Thyroid gland (tissue), 4 donors: ENCODE measurements at regions of chr2 and their contacts with region 1.

Region 1: DNA sequence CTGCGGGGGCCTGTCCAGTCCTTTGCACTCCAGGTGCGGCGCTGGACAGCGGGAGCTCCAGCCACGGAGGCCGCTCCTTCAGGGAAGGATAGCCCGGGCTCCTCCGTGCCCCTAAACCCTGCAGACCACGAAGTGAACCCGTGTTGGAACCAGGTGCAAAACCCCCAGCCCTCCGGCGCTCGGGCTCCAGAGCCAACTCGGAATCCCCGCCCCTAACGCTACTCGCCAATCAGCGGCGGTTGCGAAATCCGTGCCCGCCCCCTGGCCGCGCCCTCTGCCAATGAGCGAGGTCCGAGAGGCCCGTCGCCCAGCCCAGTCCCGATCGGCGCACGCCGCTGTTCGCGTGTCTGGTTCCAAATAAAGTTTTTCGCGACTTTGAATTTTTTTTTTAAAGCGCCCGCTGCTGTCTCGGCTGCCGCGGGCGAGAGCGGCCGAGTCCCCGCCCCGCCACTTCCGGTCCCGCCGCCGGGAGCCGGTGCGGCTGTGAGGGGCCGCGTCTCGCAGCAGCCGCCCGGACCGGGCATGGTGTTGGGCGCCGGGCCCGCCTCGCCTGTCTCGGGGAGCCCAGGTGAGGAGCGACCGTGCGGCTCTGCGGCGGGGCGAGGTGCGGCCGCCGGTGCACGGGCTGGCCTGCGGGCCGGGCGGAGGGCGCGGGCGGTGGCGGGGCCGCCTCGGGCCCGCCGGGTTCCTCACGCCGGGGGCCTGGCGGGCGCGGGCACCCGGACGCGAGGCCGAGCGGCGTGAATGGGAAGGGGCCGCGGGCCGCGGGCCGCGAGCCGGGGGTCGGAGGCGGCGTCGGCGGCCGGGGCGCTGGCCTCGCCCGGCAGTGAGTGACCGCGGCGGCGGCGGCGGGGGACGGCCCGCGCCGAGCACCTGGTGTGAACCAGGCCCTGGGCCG is at the start of gene UBE2F:
- DNase-seq: peak; percentile 97 to 98
- H3K4me3 ChIP-seq: peak within 1 kb of the TSS; percentile 46 to 72 (median 62)
- H3K27ac ChIP-seq: peak within 1 kb of the TSS; percentile 36 to 76 (median 69)
- H3K4me1 ChIP-seq: peaks cover 27 to 35% of the 10 kb centered on the region in 2 donors
- H3K27me3 ChIP-seq: no peaks in the 10 kb centered on the region
- CTCF ChIP-seq: no peak
- POLR2A ChIP-seq: peak; percentile 69 to 92
- total RNA-seq, gene UBE2F: 79.8 to 134 (median 122) TPM

Region 2: DNA sequence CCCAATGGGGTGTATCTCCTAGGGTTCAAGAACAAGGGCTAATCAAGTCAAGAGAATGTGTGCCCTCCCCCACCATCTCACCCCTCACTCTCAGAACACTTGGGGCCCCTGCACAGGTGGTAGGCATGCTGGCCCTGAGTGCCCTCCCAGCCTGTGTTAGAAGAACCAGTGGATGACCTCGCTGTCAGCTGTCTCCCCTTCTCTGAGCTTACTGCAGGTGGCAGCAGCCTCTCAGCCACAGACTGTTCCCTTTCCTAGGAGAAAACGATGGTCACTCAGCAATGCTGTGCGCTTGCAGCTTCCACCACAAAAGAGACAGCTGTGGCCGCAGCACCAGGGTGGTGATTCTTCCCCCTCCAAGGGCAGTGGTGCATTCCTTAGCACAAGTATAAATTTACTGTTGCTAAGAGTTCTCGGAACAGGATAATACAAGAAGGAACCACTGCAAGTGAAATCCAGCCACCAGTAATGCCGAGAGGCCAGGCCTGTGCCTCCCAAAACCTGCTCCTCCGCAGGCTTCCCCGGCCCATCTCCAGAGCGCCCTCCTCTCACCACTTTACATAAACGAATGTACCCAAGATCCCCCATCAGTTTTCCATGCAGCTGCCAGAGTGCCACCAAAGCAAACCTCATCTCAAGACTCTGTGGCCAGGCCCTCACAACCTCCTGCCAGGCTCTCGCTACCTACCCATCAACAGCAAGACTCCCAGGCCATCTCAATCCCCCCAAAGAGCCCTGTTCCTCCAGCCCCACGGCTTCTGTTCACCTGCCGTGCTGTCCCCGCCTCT is 108.3 kb before region 1 on chr2:
- intact Hi-C with region 1: loop called (anchors 10 kb)
- DNase-seq: peak; percentile 69 to 71
- H3K4me3 ChIP-seq: no peak overlapping the region
- H3K27ac ChIP-seq: no peak overlapping the region
- H3K4me1 ChIP-seq: peaks cover 6 to 16% of the 10 kb centered on the region in 2 donors
- H3K27me3 ChIP-seq: no peaks in the 10 kb centered on the region
- CTCF ChIP-seq: peak; percentile 24 to 85 (median 76)
- POLR2A ChIP-seq: no peak

Region 3: DNA sequence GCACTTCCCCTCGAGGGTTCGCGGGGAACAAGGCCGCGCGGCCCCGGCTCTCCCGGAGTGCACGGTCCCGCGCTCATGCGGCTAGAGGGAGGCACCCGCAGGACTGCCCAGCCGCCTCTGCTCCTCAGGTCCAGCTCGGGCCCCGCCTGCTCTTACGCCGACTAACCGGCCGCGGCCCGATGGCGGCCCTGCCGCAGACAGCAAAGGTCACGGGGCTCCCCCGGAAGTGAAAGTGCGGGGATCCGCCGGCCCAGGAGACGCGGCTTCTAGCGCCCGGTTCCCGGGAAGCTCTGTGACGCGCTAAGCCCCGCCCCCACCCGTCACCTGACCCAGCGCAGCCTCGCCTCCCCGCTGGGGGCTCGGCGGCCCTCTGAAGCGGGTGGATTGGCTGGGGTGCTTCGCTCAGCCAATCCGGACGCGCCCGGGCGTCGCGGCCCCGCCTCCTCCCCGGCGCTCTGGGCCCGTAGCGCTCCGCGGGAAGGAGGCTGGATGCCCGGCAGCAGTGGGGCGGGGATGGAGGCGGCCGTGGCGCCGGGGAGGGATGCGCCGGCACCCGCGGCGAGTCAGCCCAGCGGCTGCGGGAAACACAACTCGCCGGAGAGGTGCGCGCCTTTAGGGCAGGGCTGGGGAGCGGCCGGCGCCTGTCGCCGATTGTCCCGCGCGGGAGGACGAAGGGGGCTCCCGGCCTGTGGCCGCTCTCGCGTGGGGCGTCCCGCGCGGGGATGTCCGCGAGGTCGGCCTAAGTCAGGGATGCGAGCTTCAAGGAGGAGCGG is 93.9 kb after region 1 on chr2 and contains the start of gene SCLY:
- intact Hi-C with region 1: loop called (anchors 2 kb)
- DNase-seq: peak; percentile 98
- H3K4me3 ChIP-seq: peak within 1 kb of the TSS; percentile 68 to 91 (median 76)
- H3K27ac ChIP-seq: peak within 1 kb of the TSS; percentile 65 to 87 (median 85)
- H3K4me1 ChIP-seq: peaks cover 10 to 12% of the 10 kb centered on the region in 2 donors
- H3K27me3 ChIP-seq: no peaks in the 10 kb centered on the region
- CTCF ChIP-seq: no peak
- POLR2A ChIP-seq: peak in 1 of 2 donors; percentile 87
- total RNA-seq, gene SCLY: 21.8 to 48.2 (median 31.0) TPM

Region 4: GRCh38 chr2:238256594-238257104 is 289.8 kb after region 1 on chr2:
- intact Hi-C with region 1: loop called (anchors 10 kb)
- DNase-seq: peak; percentile 93 to 94
- H3K4me3 ChIP-seq: no peak overlapping the region
- H3K27ac ChIP-seq: no peak overlapping the region
- H3K4me1 ChIP-seq: peaks cover 11 to 18% of the 10 kb centered on the region in 2 donors
- H3K27me3 ChIP-seq: no peaks in the 10 kb centered on the region
- CTCF ChIP-seq: peak; percentile 75 to 97 (median 92)
- POLR2A ChIP-seq: no peak